H1 (cell line): ENCODE measurements at regions of chr18 and their contacts with region 1.

Region 1: DNA sequence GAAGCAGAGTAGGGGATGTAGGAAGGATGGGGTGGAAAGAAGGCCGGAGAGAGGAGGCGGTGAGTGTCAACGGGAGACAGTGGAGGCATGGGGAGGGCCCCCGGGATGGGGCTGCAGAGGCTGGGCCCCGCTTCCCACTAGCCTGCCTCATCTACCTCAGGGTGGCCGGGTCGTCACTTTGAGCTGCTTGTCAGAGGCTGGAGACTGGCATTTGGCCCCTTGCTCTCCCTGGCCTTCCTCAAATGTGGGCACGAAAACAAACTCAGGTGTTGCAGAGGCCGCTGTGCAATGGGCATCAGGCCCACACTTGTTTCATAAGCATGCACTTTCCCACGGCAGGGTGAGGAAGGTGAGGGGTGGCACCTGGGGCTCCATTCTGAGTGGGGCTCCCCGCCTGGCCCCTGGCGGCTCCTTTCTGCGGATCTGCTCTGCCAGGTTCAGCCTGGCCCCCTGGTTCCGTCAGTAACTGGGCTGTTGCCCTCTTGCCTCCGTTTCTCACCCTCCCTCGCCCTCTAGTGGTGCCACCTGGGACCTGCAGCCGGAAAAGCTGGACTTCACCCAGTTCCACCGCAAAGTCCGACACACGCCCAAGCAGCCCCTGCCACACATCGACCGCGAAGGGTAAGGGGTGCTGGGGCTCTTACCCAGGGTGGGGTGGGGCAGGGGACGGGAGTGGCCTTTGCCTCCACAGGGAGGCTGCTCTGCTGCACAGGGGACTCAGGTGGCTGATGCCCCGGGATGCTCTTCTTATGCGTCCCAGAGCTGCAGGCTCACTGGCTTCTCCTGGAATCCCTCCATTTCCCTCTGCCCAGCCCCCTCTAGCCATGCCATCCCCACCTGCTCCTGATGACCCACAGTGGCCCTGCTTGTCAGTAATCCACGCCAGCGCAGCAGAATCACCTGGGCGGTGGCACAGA is 125.4 kb downstream of the CTIF start:
- DNase-seq: peak; percentile 56 to 99
- H3K4me3 ChIP-seq: no peak overlapping the region
- H3K27ac ChIP-seq: no peak overlapping the region
- H3K4me1 ChIP-seq: peaks cover 0 to 9% (median 5%) of the 10 kb centered on the region in 4 experiments; a peak in 5 of 7 replicates
- H3K27me3 ChIP-seq: no peaks in the 10 kb centered on the region
- CTCF ChIP-seq: peak; percentile 93 to 97 (median 93)
- EP300 ChIP-seq: no peak
- POLR2A ChIP-seq: no peak
- RAD21 ChIP-seq: peak; percentile 83 to 89

Region 2: GRCh38 chr18:48649231-48649630 is 15.0 kb before region 1 on chr18:
- CTCF ChIA-PET with region 1: interaction called, 16 read pairs
- POLR2A ChIA-PET with region 1: no interaction called
- DNase-seq: no peak
- H3K4me3 ChIP-seq: no peak overlapping the region
- H3K27ac ChIP-seq: no peak overlapping the region
- H3K4me1 ChIP-seq: peaks cover 0 to 8% (median 2%) of the 10 kb centered on the region in 4 experiments; a peak in 2 of 7 replicates
- H3K27me3 ChIP-seq: no peaks in the 10 kb centered on the region
- CTCF ChIP-seq: peak; percentile 2 to 29 (median 17); a peak in 3 of 4 replicates
- EP300 ChIP-seq: no peak
- POLR2A ChIP-seq: no peak
- RAD21 ChIP-seq: 0 out of 4 replicates have a peak, but pooled peaks of 1 of the 2 experiments have one; percentile 15

Region 3: DNA sequence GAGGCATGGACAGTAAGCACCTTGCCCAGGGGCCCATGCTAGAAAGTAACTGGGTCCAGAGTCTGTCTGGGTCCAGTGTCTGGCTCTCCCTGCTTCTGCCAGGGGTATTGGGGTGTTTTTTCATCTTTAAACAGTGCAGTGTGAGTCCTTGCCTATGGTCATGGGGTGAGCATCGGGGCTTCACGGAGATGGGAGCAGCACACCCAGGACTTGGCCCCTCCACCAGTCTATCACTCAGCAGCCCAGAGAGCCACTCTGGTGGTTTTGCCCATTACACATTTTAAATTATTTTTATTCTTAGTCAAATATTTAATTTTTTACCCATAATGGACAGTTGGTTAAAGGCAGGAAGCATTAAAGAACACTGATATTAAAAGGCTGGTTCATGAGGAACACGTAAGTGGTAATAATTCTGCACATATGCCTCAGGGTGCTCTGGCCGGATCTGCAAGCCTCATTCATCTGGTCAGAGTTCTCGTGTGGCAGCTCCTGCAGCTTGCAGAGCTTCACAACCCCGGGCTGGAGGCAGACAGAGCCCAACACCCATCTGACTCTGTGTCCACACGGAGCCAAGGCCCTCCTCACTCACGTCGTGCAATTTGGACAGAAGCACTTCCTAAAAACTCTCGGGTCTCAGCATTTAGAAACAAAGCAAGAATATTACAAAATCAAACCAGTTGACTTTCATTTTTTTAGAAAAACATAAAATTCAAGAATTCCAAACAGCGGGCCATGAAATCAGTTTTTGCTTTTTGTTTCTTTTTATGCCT is 78.7 kb after region 1 on chr18:
- CTCF ChIA-PET with region 1: no interaction called
- POLR2A ChIA-PET with region 1: no interaction called
- DNase-seq: no peak
- H3K4me3 ChIP-seq: no peak overlapping the region
- H3K27ac ChIP-seq: no peak overlapping the region
- H3K4me1 ChIP-seq: no peaks in the 10 kb centered on the region; a peak in 1 of 7 replicates
- H3K27me3 ChIP-seq: no peaks in the 10 kb centered on the region
- CTCF ChIP-seq: no peak
- EP300 ChIP-seq: no peak
- POLR2A ChIP-seq: no peak
- RAD21 ChIP-seq: no peak